GM10248 (cell line): ENCODE measurements at regions of chr3 and their contacts with region 1.

Region 1: DNA sequence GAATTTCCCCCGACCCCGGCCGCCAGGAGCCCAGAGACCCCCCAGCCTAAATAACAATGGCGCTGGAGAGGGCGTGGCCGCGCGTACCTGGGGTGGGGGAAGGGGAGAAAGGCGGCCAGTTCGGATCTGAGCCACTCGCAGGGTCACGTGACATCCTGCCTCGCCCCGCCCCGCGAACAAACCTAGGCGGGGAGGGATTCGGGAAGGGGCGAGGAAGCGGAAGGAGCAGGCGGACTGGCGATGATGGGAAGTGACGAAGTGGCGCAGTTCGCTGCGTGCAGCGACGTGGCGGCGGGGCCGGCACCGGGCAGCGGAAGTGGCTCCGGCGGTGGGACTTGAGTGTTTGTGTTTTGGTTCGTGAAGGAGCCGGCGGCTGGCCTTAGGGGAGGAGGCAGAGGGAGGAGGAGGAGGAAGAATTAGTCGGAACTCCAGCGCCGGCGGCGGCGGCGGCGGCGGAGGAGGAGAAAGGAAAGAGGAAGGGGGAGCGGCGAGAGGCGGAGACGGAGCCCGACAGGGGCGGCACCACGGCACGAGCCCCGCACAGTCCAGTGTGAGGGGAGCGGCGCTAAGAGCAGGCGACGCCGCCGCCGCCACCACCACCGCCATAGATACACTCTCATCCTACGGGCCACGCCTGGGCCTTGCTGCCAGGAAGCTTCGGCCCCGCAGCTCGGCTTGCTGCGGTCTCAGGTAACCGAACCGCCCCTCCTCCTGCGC is at the start of gene RAB5A:
- DNase-seq: peak; percentile 97
- CTCF ChIP-seq: no peak

Region 2: DNA sequence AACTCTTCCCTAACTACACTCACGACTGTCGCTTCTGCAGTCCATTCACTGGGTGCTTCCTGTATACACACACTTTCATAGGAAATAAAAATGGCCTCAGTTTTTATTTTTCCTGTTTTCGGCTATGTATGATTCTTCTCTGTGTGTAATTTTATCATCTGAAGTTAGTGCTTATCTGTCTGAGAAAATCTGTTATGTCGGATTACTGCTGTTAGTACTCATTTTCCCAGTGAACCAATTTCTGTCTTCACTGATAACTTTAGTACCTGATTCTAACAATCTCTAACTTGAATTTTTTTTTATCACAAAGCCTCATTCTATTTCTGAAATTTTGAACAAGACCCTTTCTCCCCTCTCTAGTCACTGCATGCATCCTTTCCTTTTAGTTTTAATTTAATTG is 20.8 kb after region 1 on chr3:
- CTCF ChIA-PET with region 1: no interaction called
- POLR2A ChIA-PET with region 1: no interaction called
- DNase-seq: no peak
- CTCF ChIP-seq: no peak

Region 3: DNA sequence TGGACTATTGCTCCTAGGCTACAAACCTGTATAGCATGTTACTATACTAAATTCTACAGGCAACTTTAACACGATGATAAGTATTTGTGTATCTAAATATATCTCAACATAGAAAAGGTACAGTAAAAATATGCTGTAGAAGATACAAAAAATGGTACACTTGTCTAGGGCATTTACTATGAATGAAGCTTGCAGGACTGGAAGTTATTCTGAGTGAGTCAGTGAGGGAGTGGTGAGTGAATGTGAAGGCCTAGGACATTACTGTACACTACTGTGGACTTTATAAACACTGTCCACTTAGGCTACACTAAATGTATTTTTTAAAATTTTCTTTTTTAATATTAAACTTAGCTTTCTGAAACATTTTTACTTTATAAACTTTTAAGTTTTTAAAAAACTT is 379.6 kb after region 1 on chr3:
- CTCF ChIA-PET with region 1: no interaction called
- POLR2A ChIA-PET with region 1: interaction called, 10 read pairs
- DNase-seq: no peak
- CTCF ChIP-seq: no peak